ENCODE measurements at regions of chr5 and their contacts with region 1.

Region 1: DNA sequence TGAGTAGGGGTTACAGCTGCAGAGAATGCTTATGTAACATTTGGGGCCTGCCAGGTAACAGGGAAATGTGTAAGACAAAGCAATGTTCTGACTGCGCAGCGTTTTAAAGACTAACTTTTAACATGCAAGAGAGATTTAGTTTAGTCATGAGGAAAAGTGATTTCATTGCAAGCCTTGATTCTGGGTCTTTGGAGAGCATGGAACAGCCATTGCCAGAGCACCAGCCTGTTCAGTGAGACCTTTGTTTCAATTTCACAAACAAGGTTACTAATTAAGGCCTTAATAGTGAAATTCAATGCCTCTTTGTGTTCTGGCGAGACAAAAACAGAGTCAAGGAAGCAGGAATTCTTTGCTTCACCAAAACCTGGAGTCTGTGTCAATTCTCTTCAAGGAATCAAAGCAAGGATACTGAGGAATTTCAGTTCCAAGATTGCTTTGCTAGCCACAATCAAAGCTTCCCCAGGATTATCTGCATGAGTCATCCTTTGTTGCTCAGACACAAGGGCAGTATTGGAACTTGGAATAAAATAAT is 14.4 kb downstream of the CKMT2 start:
- DNase-seq: no peak
- ATAC-seq: no peak
- H3K4me3 ChIP-seq: no peak overlapping the region
- H3K27ac ChIP-seq: no peak overlapping the region
- H3K4me1 ChIP-seq: no peaks in the 10 kb centered on the region
- H3K27me3 ChIP-seq: no peaks in the 10 kb centered on the region
- CTCF ChIP-seq: no peak

Region 2: DNA sequence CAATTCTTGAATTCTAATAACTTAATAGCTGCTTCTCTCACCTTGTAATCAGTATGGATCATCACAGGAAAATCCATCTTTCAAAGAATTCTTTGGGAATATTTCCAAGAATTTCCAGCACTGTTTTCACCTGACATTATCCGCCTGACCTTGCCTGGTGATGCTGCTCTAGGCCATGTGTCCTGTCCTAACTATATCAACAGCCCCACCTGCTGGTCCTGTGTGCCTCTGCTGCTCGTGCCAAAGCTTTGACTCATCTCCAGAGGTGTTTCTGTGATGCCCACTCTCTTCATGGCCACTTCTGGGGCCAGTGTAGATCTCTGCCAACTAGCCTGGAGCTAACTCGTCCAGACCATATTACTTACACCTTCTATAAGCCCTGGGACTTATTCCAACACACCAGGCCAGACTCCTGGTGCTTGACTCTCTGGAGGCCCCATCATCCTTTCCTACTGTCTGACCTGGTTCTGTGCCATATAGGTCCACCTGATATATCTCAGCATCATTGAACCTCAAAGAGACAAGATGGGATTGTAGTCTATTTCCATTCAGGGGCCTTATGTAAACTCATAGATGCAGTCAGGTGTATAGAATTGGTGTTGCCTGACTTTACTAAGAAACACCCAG is 81.9 kb before region 1 on chr5:
- CTCF ChIA-PET with region 1: no interaction called
- POLR2A ChIA-PET with region 1: no interaction called
- in situ Hi-C with region 1: no loop called
- intact Hi-C with region 1: no loop called
- DNase-seq: peak; percentile 67
- ATAC-seq: peak; percentile 93
- H3K4me3 ChIP-seq: no peak overlapping the region
- H3K27ac ChIP-seq: no peak overlapping the region
- H3K4me1 ChIP-seq: no peaks in the 10 kb centered on the region
- H3K27me3 ChIP-seq: no peaks in the 10 kb centered on the region
- CTCF ChIP-seq: peak; percentile 89

Region 3: DNA sequence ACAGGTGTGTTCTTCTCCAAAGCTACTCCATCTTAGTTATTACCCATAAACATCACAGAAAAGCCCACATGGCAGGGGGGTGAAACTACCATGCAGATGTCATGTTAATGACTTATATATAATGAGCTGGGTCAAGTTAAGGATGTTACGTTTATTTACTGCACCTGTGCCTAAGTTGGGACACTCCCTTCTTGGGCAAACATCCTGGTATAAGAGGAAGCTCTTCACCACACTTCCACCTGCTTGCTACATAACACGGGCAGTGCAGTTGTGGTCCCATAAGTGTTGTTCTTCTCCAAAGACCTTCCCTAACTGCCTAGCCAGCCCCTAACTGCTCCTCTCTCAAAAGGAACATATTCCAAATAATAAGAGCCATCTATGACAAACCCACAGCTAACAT is 44.6 kb after region 1 on chr5:
- CTCF ChIA-PET with region 1: no interaction called
- POLR2A ChIA-PET with region 1: no interaction called
- in situ Hi-C with region 1: no loop called
- intact Hi-C with region 1: loop called (anchors 10 kb)
- DNase-seq: no peak
- ATAC-seq: no peak
- H3K4me3 ChIP-seq: no peak overlapping the region
- H3K27ac ChIP-seq: no peak overlapping the region
- H3K4me1 ChIP-seq: no peaks in the 10 kb centered on the region
- H3K27me3 ChIP-seq: no peaks in the 10 kb centered on the region
- CTCF ChIP-seq: no peak

Region 4: GRCh38 chr5:81525690-81526089 is 278.2 kb after region 1 on chr5:
- CTCF ChIA-PET with region 1: no interaction called
- POLR2A ChIA-PET with region 1: no interaction called
- in situ Hi-C with region 1: no loop called
- intact Hi-C with region 1: no loop called
- DNase-seq: no peak
- ATAC-seq: no peak
- H3K4me3 ChIP-seq: no peak overlapping the region
- H3K27ac ChIP-seq: no peak overlapping the region
- H3K4me1 ChIP-seq: no peaks in the 10 kb centered on the region
- H3K27me3 ChIP-seq: no peaks in the 10 kb centered on the region
- CTCF ChIP-seq: no peak

Measured in Panc1 (cell line).